Activated T-helper 1 cell treated with anti-CD3 and anti-CD28 coated beads, Interleukin-12 subunit alpha, Interleukin-12 subunit beta, Interleukin-2, Interleukin-4 antibody, amounts not matched to agents 30 ng/mL and 10 ng/mL and 1 ng/mL, durations not matched to agents 14 hours and 24 hours and 36 hours (primary cell): ENCODE measurements at regions of chr2 and their contacts with region 1.

Region 1: GRCh38 chr2:157480182-157480961 is 36.5 kb upstream of the CYTIP start:
- DNase-seq: peak; percentile 62
- H3K4me3 Mint-ChIP-seq: peak overlapping the region; percentile 83
- H3K27ac Mint-ChIP-seq: peak overlapping the region; percentile 99
- H3K4me1 Mint-ChIP-seq: peaks cover 95% of the 10 kb centered on the region
- H3K27me3 Mint-ChIP-seq: no peaks in the 10 kb centered on the region

Region 2: DNA sequence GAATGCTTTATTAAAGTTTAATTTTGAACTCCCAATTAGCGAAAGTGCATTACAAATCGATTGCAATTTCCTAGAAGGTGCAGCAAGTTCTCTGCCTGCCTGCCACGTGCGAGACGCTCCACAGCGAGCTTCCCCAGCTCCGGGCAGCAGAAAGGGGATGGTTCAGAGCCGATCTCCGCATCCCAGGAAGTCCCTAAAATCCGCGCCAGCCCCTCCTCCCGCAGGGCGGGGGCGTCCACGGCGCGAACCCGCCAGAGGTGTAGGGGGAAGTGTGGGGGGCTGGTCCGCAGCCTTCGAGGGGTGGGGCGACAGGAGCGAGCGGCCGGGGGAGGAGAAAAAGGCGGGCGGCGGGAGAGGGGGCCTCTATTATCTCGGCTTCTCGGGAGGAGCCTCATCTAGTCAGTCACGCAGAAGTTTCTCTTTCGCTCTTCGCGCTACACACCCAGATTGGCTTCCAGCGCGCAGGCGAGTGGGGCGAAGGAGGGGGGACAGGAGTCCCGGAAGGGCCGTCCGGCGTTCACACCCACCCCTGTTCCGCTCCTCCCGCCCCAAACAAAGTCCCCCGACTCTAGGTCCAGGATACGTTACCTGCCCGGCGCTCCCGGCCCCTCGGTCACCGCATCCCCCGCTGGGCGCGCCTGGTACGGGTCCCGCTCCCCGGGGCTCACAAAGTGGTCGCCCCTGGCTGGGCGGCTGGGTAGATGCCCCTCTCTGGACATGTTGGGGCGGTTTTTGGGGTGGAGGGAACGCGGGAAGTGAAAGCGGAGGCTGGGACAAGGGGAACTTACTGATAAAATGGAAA is 1138.7 kb before region 1 on chr2:
- intact Hi-C with region 1: loop called (anchors 5 kb)
- DNase-seq: peak; percentile 85
- H3K4me3 Mint-ChIP-seq: peak overlapping the region; percentile 96
- H3K27ac Mint-ChIP-seq: peak overlapping the region; percentile 99
- H3K4me1 Mint-ChIP-seq: peaks cover 57% of the 10 kb centered on the region
- H3K27me3 Mint-ChIP-seq: no peaks in the 10 kb centered on the region

Region 3: DNA sequence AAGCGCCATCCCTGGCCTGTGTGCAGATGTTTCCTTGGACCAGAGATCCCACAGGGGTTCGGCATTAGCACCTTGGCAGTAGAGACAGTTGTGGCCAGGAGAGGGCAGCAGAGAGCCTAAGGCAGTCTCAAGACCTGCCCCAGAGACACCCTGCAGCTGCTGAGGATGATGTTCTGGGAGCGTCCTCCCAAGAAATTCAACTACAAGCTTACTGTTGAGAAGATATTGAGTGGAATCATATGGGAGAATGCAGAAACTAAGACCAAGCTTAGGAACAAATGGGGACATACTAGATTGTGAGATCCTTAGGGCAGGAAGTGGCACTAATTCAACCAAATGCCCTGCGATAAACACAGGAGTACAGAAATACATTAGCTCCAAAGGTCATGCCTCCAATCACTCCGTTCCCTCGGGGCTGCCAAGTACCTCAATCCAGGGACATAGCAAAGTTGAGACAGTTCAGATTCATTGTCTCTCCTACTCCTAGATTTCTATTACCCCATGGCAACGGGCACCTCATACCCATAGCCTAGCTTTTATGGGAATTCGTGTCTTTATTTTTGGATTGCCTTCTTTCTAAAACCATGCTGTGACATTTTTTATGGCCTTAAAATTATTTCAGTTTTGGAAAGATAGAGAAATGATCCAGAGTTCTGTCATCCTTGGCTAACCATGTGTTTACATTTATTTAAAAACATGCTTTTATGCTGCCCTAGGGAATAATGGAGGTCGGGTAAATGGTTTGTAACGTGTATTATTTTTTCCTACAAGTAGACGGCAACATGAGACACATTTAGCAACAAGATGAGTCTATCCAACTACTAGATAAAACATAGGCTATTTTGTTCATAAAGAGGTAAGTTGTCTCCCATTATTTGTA is 152.5 kb before region 1 on chr2:
- intact Hi-C with region 1: loop called (anchors 2 kb)
- DNase-seq: peak; percentile 74
- H3K4me3 Mint-ChIP-seq: peak overlapping the region; percentile 32
- H3K27ac Mint-ChIP-seq: peak overlapping the region; percentile 26
- H3K4me1 Mint-ChIP-seq: peaks cover 38% of the 10 kb centered on the region
- H3K27me3 Mint-ChIP-seq: no peaks in the 10 kb centered on the region

Region 4: DNA sequence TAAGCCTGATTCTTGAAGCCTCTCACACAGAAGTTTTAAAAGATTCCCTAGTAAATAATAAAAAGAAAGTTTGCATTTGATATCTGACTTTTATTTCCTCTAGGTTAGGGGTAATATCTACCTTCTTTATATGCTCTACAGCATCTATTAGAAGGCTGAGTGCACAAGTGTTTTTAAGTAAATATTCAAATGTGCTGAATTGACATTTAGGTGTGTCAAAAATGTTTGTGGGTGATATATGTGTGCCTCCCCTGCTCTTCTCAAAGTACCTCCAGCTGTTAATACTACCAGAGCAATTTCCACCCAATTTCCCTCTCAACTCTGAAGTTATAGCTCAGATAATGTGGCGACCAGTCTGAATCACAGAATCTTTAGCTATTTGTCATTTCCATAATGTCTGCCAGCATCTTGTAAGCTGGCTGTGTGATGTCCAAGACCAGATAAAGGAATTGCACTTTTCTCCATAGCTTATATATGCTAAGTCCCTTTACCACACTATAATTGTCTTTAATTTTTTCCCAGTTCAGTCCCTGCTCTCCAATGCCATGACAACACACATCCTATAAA is 130.3 kb before region 1 on chr2:
- intact Hi-C with region 1: no loop called
- DNase-seq: no peak
- H3K4me3 Mint-ChIP-seq: no peak overlapping the region
- H3K27ac Mint-ChIP-seq: no peak overlapping the region
- H3K4me1 Mint-ChIP-seq: no peaks in the 10 kb centered on the region
- H3K27me3 Mint-ChIP-seq: peaks cover 2% of the 10 kb centered on the region

Region 5: DNA sequence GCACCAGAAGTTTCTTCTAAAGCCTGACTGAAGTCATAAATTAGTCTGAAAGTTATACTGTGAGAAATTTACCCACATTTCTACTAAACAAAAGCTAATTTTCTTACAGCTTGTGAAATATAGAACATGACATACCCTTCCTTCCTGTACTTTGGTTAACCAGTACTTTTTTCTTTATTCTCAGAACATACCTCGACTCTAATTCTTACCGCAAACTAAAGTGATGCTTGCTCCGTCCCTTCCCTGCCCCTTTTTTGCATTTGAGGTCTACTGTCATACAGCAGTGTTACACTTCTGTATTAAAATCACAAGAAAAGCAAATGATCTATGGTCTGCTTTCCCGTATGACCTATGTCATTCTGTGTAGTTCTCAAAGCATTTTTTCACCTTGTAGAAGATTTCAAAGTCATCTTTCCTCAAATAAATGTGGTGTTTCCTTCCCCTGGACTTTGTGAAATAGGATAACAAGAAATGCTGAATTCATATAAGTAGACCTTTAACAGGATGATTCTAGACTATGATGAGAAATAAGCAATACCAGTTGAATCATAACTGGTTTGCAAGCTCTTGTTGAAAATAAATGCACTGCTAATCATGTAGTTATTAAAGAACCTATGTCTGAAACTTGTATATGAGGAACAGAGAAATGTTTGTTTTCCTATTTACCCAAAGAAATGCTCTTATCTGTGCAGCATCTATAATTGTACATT is 66.9 kb before region 1 on chr2:
- intact Hi-C with region 1: loop called (anchors 1 kb)
- DNase-seq: peak; percentile 60
- H3K4me3 Mint-ChIP-seq: peak overlapping the region; percentile 82
- H3K27ac Mint-ChIP-seq: peak overlapping the region; percentile 91
- H3K4me1 Mint-ChIP-seq: peaks cover 84% of the 10 kb centered on the region
- H3K27me3 Mint-ChIP-seq: no peaks in the 10 kb centered on the region

Region 6: GRCh38 chr2:157433394-157433793 is 47.0 kb before region 1 on chr2:
- intact Hi-C with region 1: no loop called
- DNase-seq: no peak
- H3K4me3 Mint-ChIP-seq: peak overlapping the region; percentile 84
- H3K27ac Mint-ChIP-seq: peak overlapping the region; percentile 96
- H3K4me1 Mint-ChIP-seq: peaks cover 95% of the 10 kb centered on the region
- H3K27me3 Mint-ChIP-seq: no peaks in the 10 kb centered on the region

Region 7: GRCh38 chr2:157468931-157469708 is 11.3 kb before region 1 on chr2:
- intact Hi-C with region 1: loop called (anchors 1 kb)
- DNase-seq: no peak
- H3K4me3 Mint-ChIP-seq: peak overlapping the region; percentile 71
- H3K27ac Mint-ChIP-seq: peak overlapping the region; percentile 97
- H3K4me1 Mint-ChIP-seq: peaks cover 90% of the 10 kb centered on the region
- H3K27me3 Mint-ChIP-seq: no peaks in the 10 kb centered on the region

Region 8: GRCh38 chr2:158191076-158191895 is 710.9 kb after region 1 on chr2:
- intact Hi-C with region 1: loop called (anchors 10 kb)
- DNase-seq: peak; percentile 6
- H3K4me3 Mint-ChIP-seq: peak overlapping the region; percentile 50
- H3K27ac Mint-ChIP-seq: peak overlapping the region; percentile 40
- H3K4me1 Mint-ChIP-seq: peaks cover 28% of the 10 kb centered on the region
- H3K27me3 Mint-ChIP-seq: peaks cover 24% of the 10 kb centered on the region